Activated CD4-positive, alpha-beta memory T cell treated with anti-CD3 and anti-CD28 coated beads for 36 hours (primary cell): ENCODE measurements at regions of chr7 and their contacts with region 1.

Region 1: GRCh38 chr7:50832744-50833143 is 50.0 kb upstream of the GRB10 start:
- DNase-seq: peak; percentile 51
- H3K4me3 Mint-ChIP-seq: no peak overlapping the region
- H3K27ac Mint-ChIP-seq: no peak overlapping the region
- H3K4me1 Mint-ChIP-seq: peaks cover 17% of the 10 kb centered on the region
- H3K27me3 Mint-ChIP-seq: peaks cover 33% of the 10 kb centered on the region

Region 2: GRCh38 chr7:50534690-50535290 is 298.0 kb before region 1 on chr7:
- CTCF ChIA-PET with region 1: no interaction called
- POLR2A ChIA-PET with region 1: no interaction called
- intact Hi-C with region 1: loop called (anchors 1 kb)
- DNase-seq: peak; percentile 33
- H3K4me3 Mint-ChIP-seq: no peak overlapping the region
- H3K27ac Mint-ChIP-seq: no peak overlapping the region
- H3K4me1 Mint-ChIP-seq: peaks cover 27% of the 10 kb centered on the region
- H3K27me3 Mint-ChIP-seq: peaks cover 7% of the 10 kb centered on the region

Region 3: GRCh38 chr7:50595491-50596102 is 237.1 kb before region 1 on chr7:
- CTCF ChIA-PET with region 1: no interaction called
- POLR2A ChIA-PET with region 1: no interaction called
- intact Hi-C with region 1: loop called (anchors 2 kb)
- DNase-seq: peak; percentile 24
- H3K4me3 Mint-ChIP-seq: no peak overlapping the region
- H3K27ac Mint-ChIP-seq: no peak overlapping the region
- H3K4me1 Mint-ChIP-seq: peaks cover 21% of the 10 kb centered on the region
- H3K27me3 Mint-ChIP-seq: peaks cover 6% of the 10 kb centered on the region

Region 4: GRCh38 chr7:50641442-50642405 is 191.0 kb before region 1 on chr7:
- CTCF ChIA-PET with region 1: no interaction called
- POLR2A ChIA-PET with region 1: no interaction called
- intact Hi-C with region 1: no loop called
- DNase-seq: no peak
- H3K4me3 Mint-ChIP-seq: no peak overlapping the region
- H3K27ac Mint-ChIP-seq: no peak overlapping the region
- H3K4me1 Mint-ChIP-seq: peaks cover 6% of the 10 kb centered on the region
- H3K27me3 Mint-ChIP-seq: no peaks in the 10 kb centered on the region

Region 5: DNA sequence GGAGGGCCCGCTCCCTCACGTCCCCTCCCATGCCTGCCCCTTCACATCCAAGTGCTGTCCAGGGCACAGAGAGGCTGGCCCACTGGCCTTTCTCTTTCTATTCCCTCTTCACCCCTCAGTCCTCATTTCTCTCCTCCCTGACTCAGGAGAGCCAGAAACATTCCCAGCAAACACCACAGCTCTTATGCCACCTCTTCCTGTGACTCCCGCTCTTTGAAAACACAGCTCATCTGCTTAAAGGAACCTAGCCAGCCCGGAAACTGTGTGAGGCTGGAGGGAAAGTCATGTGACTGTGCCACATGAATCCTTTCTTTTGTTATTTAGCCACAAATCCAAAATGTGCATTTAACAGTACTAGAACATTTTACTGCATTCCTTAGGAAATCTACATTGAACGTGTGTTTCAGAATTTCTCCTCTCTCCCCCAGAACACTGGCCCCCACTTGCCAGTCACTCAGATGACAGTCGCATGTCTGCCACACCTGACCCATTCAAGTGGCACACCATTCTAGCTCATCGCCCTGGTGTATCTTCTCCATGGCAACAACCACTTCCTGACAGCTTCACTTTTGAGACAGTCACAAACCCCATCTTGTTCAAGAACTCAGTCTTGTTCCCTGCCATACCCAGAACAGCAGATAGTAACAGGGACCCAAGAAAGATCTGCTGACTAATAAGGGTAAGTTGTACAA is 92.9 kb before region 1 on chr7:
- CTCF ChIA-PET with region 1: no interaction called
- POLR2A ChIA-PET with region 1: no interaction called
- intact Hi-C with region 1: loop called (anchors 2 kb)
- DNase-seq: peak; percentile 80
- H3K4me3 Mint-ChIP-seq: peak overlapping the region; percentile 62
- H3K27ac Mint-ChIP-seq: peak overlapping the region; percentile 68
- H3K4me1 Mint-ChIP-seq: peaks cover 27% of the 10 kb centered on the region
- H3K27me3 Mint-ChIP-seq: no peaks in the 10 kb centered on the region

Region 6: GRCh38 chr7:50848203-50848602 is 15.5 kb after region 1 on chr7:
- CTCF ChIA-PET with region 1: no interaction called
- POLR2A ChIA-PET with region 1: no interaction called
- intact Hi-C with region 1: no loop called
- DNase-seq: no peak
- H3K4me3 Mint-ChIP-seq: no peak overlapping the region
- H3K27ac Mint-ChIP-seq: no peak overlapping the region
- H3K4me1 Mint-ChIP-seq: no peaks in the 10 kb centered on the region
- H3K27me3 Mint-ChIP-seq: peaks cover 5% of the 10 kb centered on the region